ENCODE measurements at regions of chr19 and their contacts with region 1.

Region 1: GRCh38 chr19:17747205-17748098 is 3.8 kb upstream of the FCHO1 start:
- DNase-seq: peak; percentile 95
- H3K4me3 ChIP-seq: peak overlapping the region; percentile 17 to 52 (median 45)
- H3K27ac ChIP-seq: no peak overlapping the region
- H3K4me1 ChIP-seq: peaks cover 0 to 18% (median 10%) of the 10 kb centered on the region in 4 donors
- H3K27me3 ChIP-seq: no peaks in the 10 kb centered on the region
- CTCF ChIP-seq: no peak
- EP300 ChIP-seq: no peak
- POLR2A ChIP-seq: no peak

Region 2: GRCh38 chr19:17687857-17688784 is 59.3 kb before region 1 on chr19 and contains the start of gene UNC13A:
- intact Hi-C with region 1: no loop called
- DNase-seq: no peak
- H3K4me3 ChIP-seq: no peak within 1 kb of the TSS
- H3K27ac ChIP-seq: no peak within 1 kb of the TSS
- H3K4me1 ChIP-seq: peaks cover 0 to 24% (median 18%) of the 10 kb centered on the region in 4 donors
- H3K27me3 ChIP-seq: peaks cover 31 to 82% (median 69%) of the 10 kb centered on the region in 3 donors
- CTCF ChIP-seq: no peak
- EP300 ChIP-seq: no peak
- POLR2A ChIP-seq: no peak
- total RNA-seq, gene UNC13A: 0.16 to 0.83 (median 0.70) TPM

Region 3: GRCh38 chr19:17718947-17719711 is 28.3 kb before region 1 on chr19 and contains the start of gene MAP1S:
- intact Hi-C with region 1: loop called (anchors 2 kb)
- DNase-seq: no peak
- H3K4me3 ChIP-seq: peak within 1 kb of the TSS; percentile 84 to 100 (median 96)
- H3K27ac ChIP-seq: peak within 1 kb of the TSS; percentile 64 to 81 (median 76)
- H3K4me1 ChIP-seq: peaks cover 0 to 53% (median 47%) of the 10 kb centered on the region in 4 donors
- H3K27me3 ChIP-seq: no peaks in the 10 kb centered on the region
- CTCF ChIP-seq: no peak
- EP300 ChIP-seq: no peak
- POLR2A ChIP-seq: peak; percentile 33 to 44
- total RNA-seq, gene MAP1S: 13.3 to 35.8 (median 16.6) TPM

Measured in sigmoid colon (tissue), 7 donors.